AG04449 (cell line): ENCODE measurements at regions of chr6 and their contacts with region 1.

Region 1: DNA sequence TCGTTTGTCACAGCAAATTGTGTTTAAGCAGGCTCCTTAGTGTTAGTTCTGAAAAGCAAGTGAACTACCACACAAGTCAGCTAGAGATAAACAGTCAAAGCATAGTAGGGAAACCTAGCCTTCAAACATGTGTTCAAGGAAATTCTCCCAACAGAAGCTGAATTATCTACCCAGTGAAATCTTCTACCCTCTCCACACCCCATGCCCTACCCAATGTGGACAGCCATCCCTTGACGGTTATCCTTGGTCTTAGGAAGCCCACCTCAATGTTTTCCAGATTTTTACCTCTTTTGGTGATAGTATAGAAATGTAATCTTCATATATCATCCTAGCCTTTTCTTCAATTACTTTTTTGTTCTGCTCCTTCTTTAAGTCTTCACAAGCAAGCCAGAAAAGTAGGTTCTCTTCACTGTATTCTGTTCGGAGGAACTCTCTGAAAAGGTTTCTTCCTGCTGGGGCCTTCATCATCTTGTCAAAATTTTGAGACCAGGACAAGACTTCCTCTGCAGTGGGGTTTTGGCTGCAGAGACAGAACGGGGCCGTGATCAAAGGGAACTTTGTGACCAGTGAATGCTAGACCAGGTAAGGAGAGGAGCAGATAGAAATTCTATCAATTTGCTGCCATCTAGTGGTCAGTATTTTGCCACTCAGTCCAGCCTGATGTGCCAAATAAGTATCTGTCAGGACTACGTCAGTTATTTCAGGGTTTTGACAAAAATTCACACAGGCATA is 21.6 kb upstream of the MTRF1L start:
- DNase-seq: no peak
- H3K4me3 ChIP-seq: no peak overlapping the region
- CTCF ChIP-seq: peak; percentile 65

Region 2: GRCh38 chr6:152750694-152751093 is 273.4 kb before region 1 on chr6 and contains the start of gene VIP:
- CTCF ChIA-PET with region 1: interaction called, 10 read pairs
- POLR2A ChIA-PET with region 1: no interaction called
- DNase-seq: no peak
- H3K4me3 ChIP-seq: no peak within 1 kb of the TSS
- CTCF ChIP-seq: no peak

Region 3: GRCh38 chr6:153013438-153013837 is 10.7 kb before region 1 on chr6:
- CTCF ChIA-PET with region 1: interaction called, 20 read pairs
- POLR2A ChIA-PET with region 1: no interaction called
- DNase-seq: no peak
- H3K4me3 ChIP-seq: no peak overlapping the region
- CTCF ChIP-seq: no peak

Region 4: DNA sequence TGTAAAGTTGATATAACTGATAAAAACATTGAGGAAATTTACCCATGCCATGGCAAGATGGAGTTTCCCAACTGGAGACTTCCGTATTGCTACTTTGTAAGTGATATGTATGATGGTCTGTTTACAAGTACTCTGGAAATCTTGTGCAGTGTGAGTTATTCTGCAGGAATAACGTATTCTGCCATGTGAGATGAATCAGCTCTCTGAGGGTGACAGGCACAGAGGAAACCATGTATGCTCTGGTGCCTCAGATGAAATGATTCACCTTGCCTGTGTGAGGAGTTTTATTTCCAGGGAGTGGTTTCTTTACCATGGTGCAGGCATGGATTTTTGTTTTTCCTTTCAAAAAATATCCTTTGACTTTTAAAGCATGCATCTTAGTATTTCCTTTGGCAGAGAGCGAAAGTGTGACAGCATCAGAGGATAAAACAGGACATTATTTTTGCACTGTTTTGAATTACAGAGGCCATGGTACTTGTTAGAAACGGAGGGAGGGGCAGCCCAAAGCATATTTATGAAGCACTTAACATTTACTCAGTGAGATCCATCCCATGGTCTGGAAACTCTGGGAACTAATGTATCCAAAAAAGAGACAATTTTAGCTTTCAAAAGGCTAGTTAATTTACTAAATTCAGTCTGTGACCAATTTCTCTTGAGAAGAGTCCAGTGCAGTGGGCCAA is 14.4 kb after region 1 on chr6:
- CTCF ChIA-PET with region 1: interaction called, 12 read pairs
- POLR2A ChIA-PET with region 1: no interaction called
- DNase-seq: peak; percentile 10
- H3K4me3 ChIP-seq: no peak overlapping the region
- CTCF ChIP-seq: no peak

Region 5: DNA sequence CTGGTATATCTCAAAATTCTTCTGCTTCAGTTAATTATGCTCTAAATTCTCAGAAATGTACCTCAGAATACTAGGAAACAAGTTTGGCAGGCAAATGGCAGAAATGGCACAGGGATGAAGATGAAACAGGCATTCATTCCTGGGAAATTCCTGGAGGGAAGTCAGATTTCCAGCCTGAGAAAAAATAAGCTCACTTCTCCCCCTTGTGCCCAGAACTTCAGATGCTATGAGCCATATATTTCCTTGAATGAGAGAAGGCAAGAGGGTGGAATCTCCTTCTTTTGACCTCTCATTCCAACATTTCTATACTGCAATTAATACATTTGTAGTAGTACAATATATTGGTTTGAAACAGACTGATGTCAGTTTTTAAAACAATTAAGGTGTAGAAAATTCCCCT is 84.2 kb after region 1 on chr6:
- CTCF ChIA-PET with region 1: interaction called, 14 read pairs
- POLR2A ChIA-PET with region 1: no interaction called
- DNase-seq: no peak
- H3K4me3 ChIP-seq: no peak overlapping the region
- CTCF ChIP-seq: peak; percentile 39